Left colon (tissue), 2 donors: ENCODE measurements at regions of chrX and their contacts with region 1.

Region 1: DNA sequence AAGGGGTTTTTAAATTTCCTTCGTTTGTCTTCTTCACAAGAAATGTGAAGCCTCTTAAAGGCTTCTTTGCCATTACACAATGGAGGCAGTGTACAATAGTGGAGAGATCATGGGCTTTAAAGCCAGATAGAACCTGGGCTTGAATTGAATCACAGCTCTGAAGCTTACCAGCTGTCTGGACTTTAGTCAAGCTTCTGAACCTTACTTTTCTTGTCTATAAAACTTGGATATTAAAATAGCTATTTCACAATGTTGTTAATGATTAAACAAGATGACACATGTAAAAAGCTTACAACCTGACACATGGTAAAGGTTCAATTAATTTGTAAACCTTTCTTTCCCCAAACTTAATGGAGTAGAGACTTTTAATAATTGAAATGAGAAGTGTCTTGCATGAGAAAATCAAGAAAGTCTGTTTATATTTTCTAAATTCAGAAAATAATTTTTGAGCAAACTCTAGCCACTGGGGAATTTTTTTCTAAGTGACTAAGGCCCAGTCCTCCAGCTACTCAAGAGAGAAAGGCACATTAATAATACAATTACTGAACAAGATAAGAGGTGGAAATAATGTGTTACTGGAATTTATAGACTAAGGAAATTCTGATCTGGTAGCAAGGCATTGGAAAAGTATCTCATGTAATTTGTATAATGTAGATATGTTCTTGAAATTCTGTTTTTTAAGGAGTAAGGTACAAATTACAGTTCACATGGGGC is 21.7 kb upstream of the TBC1D8B start:
- DNase-seq: no peak
- ATAC-seq: peak; percentile 98

Region 2: DNA sequence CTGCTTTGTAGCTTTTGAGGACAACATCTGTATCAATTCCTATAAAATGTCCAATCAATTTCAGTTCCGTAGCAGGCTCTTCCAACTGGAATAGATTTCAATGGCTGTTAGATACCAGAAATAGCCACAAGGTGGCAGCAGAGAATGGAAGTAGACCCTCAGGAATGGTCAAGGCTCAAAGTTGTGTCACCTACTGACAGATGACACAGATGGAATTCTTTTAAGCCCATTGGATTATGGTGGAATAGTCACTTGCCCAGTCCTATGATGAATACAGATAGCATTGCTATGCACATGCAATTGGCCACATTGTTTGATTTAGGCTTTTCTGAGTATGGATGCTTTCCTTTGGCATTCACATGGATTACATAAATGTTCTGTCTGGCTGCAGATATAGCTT is 299.5 kb before region 1 on chrX:
- intact Hi-C with region 1: loop called in 1 of 2 experiments (anchors 10 kb)
- DNase-seq: peak in 1 of 2 donors; percentile 45
- ATAC-seq: peak; percentile 82